ENCODE measurements at regions of chr11 and their contacts with region 1.

Region 1: GRCh38 chr11:1694064-1694845 is 2.7 kb upstream of the KRTAP5-6 start:
- DNase-seq: peak; percentile 56
- H3K4me3 ChIP-seq: no peak overlapping the region
- H3K27ac ChIP-seq: no peak overlapping the region
- H3K4me1 ChIP-seq: peaks cover 16% of the 10 kb centered on the region
- H3K27me3 ChIP-seq: no peaks in the 10 kb centered on the region
- CTCF ChIP-seq: peak; percentile 94 to 98
- POLR2A ChIP-seq: no peak

Region 2: GRCh38 chr11:1763796-1764661 is 69.8 kb after region 1 on chr11 and contains the start of gene CTSD:
- CTCF ChIA-PET with region 1: interaction called, 6 read pairs
- POLR2A ChIA-PET with region 1: no interaction called
- dilution Hi-C with region 1: no loop called
- intact Hi-C with region 1: loop called (anchors 5 kb)
- DNase-seq: peak; percentile 61
- H3K4me3 ChIP-seq: peak within 1 kb of the TSS; percentile 62 to 72 (median 66)
- H3K27ac ChIP-seq: peak within 1 kb of the TSS; percentile 32
- H3K4me1 ChIP-seq: peaks cover 22% of the 10 kb centered on the region
- H3K27me3 ChIP-seq: no peaks in the 10 kb centered on the region
- CTCF ChIP-seq: no peak
- POLR2A ChIP-seq: peak; percentile 67
- total RNA-seq, gene CTSD: 197 and 215 TPM in 2 replicates

Region 3: DNA sequence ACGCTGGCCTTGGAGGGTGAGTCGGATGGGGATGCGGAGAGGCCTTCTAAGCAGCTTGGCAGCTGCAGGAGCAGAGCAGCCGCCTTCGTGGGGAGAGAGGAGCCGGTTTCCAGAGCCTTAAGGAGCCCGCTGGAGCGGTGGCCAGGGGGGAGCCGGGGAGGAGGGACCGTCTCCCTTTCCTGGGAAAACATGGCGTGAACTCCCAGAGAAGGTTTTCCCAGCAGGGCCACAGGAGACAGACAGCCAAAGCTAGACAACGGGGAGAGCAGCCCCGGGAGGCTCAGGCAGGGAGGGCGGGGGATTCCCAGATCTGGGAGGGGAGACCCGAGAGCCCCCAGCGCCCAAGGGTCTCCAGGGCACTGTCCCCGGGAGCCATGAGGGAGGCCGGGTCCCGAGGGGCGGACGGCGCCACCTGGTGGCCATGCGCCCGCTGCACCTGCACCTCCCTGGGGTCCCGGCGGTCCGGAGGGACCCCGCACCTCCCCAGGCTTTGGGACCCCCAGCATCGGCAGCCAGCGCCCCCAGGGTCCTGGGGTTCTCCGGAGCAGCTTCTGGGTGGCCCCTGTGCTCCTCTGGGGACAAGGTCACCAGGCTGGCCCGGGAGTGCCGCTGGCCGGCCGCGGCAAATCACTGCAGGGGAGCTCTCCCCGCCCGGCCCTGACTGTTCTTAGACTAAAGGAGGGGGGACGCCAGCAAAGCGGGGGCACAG is 138.1 kb after region 1 on chr11:
- CTCF ChIA-PET with region 1: interaction called, 623 read pairs
- POLR2A ChIA-PET with region 1: interaction called, 4 read pairs
- dilution Hi-C with region 1: no loop called
- intact Hi-C with region 1: loop called (anchors 1 kb)
- DNase-seq: no peak
- H3K4me3 ChIP-seq: no peak overlapping the region
- H3K27ac ChIP-seq: no peak overlapping the region
- H3K4me1 ChIP-seq: peaks cover 2% of the 10 kb centered on the region
- H3K27me3 ChIP-seq: no peaks in the 10 kb centered on the region
- CTCF ChIP-seq: peak; percentile 87 to 97
- POLR2A ChIP-seq: no peak

Region 4: DNA sequence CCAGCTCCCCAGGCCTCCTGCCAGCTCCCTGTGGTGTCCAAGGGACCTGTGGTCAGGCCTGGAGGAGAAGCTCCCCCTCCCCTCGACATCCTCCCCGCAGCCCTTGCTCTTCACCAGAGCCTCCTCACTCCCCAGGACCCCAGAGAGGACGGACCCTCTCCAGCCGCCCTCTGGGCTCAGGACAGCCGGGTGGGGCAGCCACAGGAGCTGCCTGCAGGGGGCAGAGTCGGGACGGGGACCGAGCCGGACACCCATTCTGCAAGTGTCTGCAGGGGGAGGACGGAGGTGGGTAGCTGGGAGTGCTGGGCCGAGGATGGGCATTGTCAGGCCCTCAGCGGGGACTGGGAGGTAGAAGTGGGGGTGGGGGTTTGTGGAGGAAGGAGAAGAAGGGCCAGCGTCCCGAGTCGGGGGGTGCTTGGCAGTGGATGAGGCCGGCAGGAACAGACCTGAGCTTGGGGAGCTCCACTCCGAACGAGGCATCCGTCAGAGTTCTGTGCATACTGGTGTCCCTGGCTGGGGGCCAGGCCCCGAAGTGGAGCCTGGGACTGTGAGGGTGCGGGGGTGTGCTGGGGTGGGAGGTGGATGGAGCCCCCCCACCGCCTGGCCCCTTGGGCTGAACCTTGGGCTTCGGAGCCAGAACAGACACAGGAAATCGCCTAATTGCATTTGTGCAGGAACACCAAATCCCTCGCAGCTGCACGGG is 182.3 kb after region 1 on chr11:
- CTCF ChIA-PET with region 1: interaction called, 16 read pairs
- POLR2A ChIA-PET with region 1: no interaction called
- dilution Hi-C with region 1: no loop called
- intact Hi-C with region 1: no loop called
- DNase-seq: no peak
- H3K4me3 ChIP-seq: no peak overlapping the region
- H3K27ac ChIP-seq: no peak overlapping the region
- H3K4me1 ChIP-seq: no peaks in the 10 kb centered on the region
- H3K27me3 ChIP-seq: no peaks in the 10 kb centered on the region
- CTCF ChIP-seq: peak; percentile 61 to 76
- POLR2A ChIP-seq: no peak

Region 5: GRCh38 chr11:2157294-2158040 is 463.2 kb after region 1 on chr11:
- CTCF ChIA-PET with region 1: interaction called, 167 read pairs
- POLR2A ChIA-PET with region 1: no interaction called
- dilution Hi-C with region 1: no loop called
- intact Hi-C with region 1: loop called (anchors 1 kb)
- DNase-seq: no peak
- H3K4me3 ChIP-seq: no peak overlapping the region
- H3K27ac ChIP-seq: no peak overlapping the region
- H3K4me1 ChIP-seq: no peaks in the 10 kb centered on the region
- H3K27me3 ChIP-seq: no peaks in the 10 kb centered on the region
- CTCF ChIP-seq: no peak
- POLR2A ChIP-seq: no peak